ENCODE measurements at regions of chr22 and their contacts with region 1.

Region 1: DNA sequence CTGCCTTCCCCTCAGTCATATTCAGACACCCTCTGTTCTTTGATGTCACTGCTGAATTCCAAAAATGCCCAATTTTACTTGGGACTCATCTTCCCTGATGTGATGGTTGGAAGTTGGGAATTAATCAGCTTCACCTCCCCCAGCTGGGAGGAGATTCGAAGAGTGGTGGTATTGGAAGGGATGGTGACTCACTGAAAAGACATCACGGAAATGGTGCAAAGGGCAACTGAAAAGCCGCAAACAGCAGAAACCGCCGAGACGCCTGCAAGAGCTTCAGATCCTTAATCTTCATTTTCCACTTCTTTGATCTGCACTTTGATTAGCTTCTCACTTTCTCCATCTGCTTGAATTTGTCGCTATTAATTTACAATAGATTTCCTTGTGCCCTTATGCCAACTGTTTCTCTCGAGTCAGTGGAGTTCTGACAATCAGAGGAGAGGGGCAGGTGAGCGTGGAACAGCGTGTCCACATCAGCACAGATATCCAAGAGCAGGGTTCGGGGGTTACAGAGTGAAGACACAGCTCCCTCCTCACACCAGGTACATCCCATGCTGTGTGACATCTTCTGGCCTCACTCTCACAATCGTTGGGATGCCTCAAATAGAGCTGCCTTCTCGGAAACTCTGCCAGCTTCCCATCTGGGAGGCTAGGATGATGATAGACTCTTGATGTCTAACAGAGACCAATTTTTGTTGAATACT is 325.4 kb downstream of the BRD1 start:
- DNase-seq: no peak
- ATAC-seq: no peak

Region 2: GRCh38 chr22:48872271-48873190 is 629.7 kb before region 1 on chr22:
- intact Hi-C with region 1: loop called (anchors 10 kb)
- DNase-seq: peak; percentile 28
- ATAC-seq: no peak

Region 3: GRCh38 chr22:48894064-48894671 is 608.1 kb before region 1 on chr22:
- intact Hi-C with region 1: no loop called
- DNase-seq: peak; percentile 53
- ATAC-seq: no peak